Heart left ventricle (tissue), 16 donors: ENCODE measurements at regions of chr2 and their contacts with region 1.

Region 1: GRCh38 chr2:233251306-233252116 is at the start of gene ATG16L1:
- DNase-seq: peak; percentile 94 to 98 (median 97)
- ATAC-seq: peak; percentile 99 to 100 (median 100)
- H3K4me3 ChIP-seq: peak within 1 kb of the TSS; percentile 73 to 99 (median 88)
- H3K27ac ChIP-seq: peak within 1 kb of the TSS in 11 of 12 donors; percentile 67 to 94 (median 85)
- H3K4me1 ChIP-seq: peaks cover 0 to 75% (median 20%) of the 10 kb centered on the region in 12 donors
- H3K27me3 ChIP-seq: no peaks in the 10 kb centered on the region
- CTCF ChIP-seq: peak; percentile 86 to 99 (median 97)
- POLR2A ChIP-seq: peak in 1 of 2 donors; percentile 83
- total RNA-seq, gene ATG16L1: 13.7 to 22.2 (median 15.8) TPM

Region 2: GRCh38 chr2:232600053-232600773 is 651.3 kb before region 1 on chr2:
- intact Hi-C with region 1: loop called in 7 of 10 experiments (anchors 5 to 10 kb)
- DNase-seq: no peak
- ATAC-seq: no peak
- H3K4me3 ChIP-seq: no peak overlapping the region
- H3K27ac ChIP-seq: no peak overlapping the region
- H3K4me1 ChIP-seq: no peaks in the 10 kb centered on the region
- H3K27me3 ChIP-seq: no peaks in the 10 kb centered on the region
- CTCF ChIP-seq: no peak
- POLR2A ChIP-seq: no peak

Region 3: DNA sequence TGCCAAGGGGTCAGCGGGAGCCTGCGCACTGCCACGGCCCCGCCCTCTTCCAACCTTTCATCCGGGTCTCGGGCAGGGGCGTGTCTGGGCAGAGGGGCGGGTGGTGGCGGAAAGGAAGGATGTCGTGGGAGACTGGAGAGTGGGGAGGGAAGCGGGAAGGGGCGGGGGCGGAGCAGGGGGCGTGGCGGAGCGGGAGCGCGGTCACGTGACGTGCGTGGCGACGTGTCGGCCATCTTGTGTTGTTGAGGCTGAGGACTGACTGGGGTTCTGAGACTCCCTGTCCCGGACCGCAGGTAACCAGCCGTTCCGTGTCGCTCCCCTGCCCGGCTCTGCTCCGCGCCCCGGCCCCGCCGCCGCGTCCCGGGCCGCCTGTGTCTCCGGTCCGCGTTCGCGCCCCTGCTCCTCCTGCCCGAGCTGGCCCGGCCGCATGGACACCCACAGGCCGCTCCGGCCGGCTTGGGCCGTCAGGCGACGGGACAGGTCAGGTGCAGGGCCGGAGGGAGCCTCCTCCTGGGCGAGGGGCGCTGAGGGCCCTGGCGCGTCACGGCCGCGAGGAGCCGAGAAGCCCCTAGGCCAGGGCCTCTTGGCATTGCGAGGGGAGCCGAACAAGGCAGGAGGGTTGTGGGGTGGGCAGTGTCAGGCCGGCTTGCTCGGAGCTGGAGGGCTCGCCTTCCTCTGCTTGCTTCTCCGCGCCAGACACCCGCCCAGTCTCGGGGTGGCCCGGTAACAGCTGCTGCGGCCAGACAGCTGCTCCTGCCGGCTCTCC is 554.2 kb before region 1 on chr2 and contains the start of gene GIGYF2:
- intact Hi-C with region 1: loop called in 1 of 10 experiments (anchors 5 kb)
- DNase-seq: peak; percentile 98
- ATAC-seq: peak; percentile 99
- H3K4me3 ChIP-seq: peak within 1 kb of the TSS; percentile 55 to 99 (median 94)
- H3K27ac ChIP-seq: peak within 1 kb of the TSS; percentile 73 to 98 (median 92)
- H3K4me1 ChIP-seq: peaks cover 2 to 47% (median 33%) of the 10 kb centered on the region in 12 donors
- H3K27me3 ChIP-seq: no peaks in the 10 kb centered on the region
- CTCF ChIP-seq: no peak
- POLR2A ChIP-seq: peak in 1 of 2 donors; percentile 56
- total RNA-seq, gene GIGYF2: 48.0 to 78.1 (median 61.3) TPM

Region 4: GRCh38 chr2:232846055-232846454 is 405.5 kb before region 1 on chr2:
- intact Hi-C with region 1: loop called in 5 of 10 experiments (anchors 5 kb)
- DNase-seq: no peak
- ATAC-seq: no peak
- H3K4me3 ChIP-seq: no peak overlapping the region
- H3K27ac ChIP-seq: no peak overlapping the region
- H3K4me1 ChIP-seq: peaks cover 0 to 17% (median 0%) of the 10 kb centered on the region in 12 donors
- H3K27me3 ChIP-seq: no peaks in the 10 kb centered on the region
- CTCF ChIP-seq: no peak
- POLR2A ChIP-seq: no peak

Region 5: DNA sequence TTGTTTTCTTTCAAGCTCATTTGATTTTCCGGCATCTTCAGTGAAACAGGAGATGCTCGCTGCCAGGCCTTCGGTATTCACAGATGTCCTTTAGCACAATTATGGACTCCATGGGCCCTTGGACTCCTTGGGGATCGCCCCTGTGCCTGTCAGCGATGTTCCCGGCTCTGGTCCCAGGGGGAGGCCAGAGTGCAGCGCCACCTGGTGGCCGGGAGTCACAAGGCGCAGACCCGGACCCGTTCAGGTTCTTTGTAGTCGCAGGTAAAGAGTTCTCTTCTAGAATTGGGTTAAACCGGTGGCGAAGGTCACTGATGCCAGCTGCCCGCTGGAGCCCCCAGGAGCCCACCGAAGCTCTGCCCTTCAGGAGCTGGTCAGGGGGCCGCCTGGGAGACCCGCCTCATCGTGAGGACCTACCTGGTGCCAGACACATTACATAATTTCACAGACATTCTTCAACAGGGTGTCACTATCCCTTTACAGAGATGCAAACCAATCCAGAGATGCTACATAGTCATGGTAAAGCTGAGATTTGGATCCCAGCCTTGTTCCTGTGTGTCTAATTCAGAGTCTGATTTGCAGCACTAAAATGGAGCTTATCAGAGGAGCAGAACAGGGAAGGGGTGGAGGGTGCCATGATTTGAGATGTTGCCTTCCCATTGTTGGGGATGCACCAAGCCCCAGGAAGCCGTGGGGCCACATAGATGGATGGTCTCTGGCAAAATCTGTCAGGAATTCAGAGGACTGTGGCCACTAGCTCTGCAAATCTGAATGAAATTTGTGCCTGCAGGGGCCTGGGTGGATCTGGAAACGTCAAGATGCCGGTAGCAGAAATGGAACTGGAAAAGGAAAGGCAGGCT is 197.4 kb before region 1 on chr2:
- intact Hi-C with region 1: loop called in 2 of 10 experiments (anchors 5 to 10 kb)
- DNase-seq: peak; percentile 47 to 81 (median 56)
- ATAC-seq: peak in 2 of 4 donors; percentile 50 to 51
- H3K4me3 ChIP-seq: no peak overlapping the region
- H3K27ac ChIP-seq: no peak overlapping the region
- H3K4me1 ChIP-seq: peaks cover 0 to 29% (median 13%) of the 10 kb centered on the region in 12 donors
- H3K27me3 ChIP-seq: peaks cover 0 to 16% (median 0%) of the 10 kb centered on the region in 9 donors
- CTCF ChIP-seq: peak; percentile 77 to 96 (median 90)
- POLR2A ChIP-seq: no peak

Region 6: DNA sequence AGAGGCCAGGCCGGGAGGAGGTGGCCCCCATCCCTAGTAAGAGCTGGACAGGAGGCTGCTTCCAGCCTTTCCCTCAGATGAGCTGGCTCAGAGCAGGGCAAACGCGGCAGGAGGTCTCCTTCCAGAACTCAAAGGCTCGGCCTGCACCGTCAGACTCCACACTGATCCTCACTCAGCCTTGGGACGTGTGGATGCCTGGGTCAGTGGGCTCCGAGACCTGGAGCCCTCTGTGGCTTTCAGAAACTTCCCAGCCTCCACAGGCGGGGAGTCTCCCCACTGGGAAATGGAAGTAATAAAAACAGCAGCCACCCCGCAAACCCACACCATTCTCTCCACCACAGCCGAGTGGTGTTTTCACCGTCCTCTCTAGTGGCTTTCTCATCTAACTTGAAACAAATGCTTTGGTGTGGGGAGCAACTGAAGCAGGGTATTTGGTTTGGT is 137.1 kb before region 1 on chr2:
- intact Hi-C with region 1: loop called in 1 of 10 experiments (anchors 10 kb)
- DNase-seq: no peak
- ATAC-seq: no peak
- H3K4me3 ChIP-seq: no peak overlapping the region
- H3K27ac ChIP-seq: no peak overlapping the region
- H3K4me1 ChIP-seq: peaks cover 0 to 9% (median 0%) of the 10 kb centered on the region in 12 donors
- H3K27me3 ChIP-seq: peaks cover 0 to 3% (median 0%) of the 10 kb centered on the region in 9 donors
- CTCF ChIP-seq: no peak
- POLR2A ChIP-seq: no peak